Activated CD4-positive, alpha-beta T cell treated with anti-CD3 and anti-CD28 coated beads for 36 hours (primary cell): ENCODE measurements at regions of chr2 and their contacts with region 1.

Region 1: GRCh38 chr2:208373460-208374089 is 33.0 kb upstream of the PTH2R start:
- DNase-seq: peak; percentile 37
- ATAC-seq: peak; percentile 47
- H3K4me3 Mint-ChIP-seq: no peak overlapping the region
- H3K27ac Mint-ChIP-seq: no peak overlapping the region
- H3K4me1 Mint-ChIP-seq: no peaks in the 10 kb centered on the region
- H3K27me3 Mint-ChIP-seq: no peaks in the 10 kb centered on the region

Region 2: GRCh38 chr2:208175069-208175839 is 198.3 kb before region 1 on chr2:
- CTCF ChIA-PET with region 1: no interaction called
- POLR2A ChIA-PET with region 1: no interaction called
- intact Hi-C with region 1: loop called in 1 of 2 experiments (anchors 1 kb)
- DNase-seq: peak; percentile 76
- ATAC-seq: peak; percentile 99
- H3K4me3 Mint-ChIP-seq: no peak overlapping the region
- H3K27ac Mint-ChIP-seq: no peak overlapping the region
- H3K4me1 Mint-ChIP-seq: peaks cover 4% of the 10 kb centered on the region
- H3K27me3 Mint-ChIP-seq: no peaks in the 10 kb centered on the region

Region 3: DNA sequence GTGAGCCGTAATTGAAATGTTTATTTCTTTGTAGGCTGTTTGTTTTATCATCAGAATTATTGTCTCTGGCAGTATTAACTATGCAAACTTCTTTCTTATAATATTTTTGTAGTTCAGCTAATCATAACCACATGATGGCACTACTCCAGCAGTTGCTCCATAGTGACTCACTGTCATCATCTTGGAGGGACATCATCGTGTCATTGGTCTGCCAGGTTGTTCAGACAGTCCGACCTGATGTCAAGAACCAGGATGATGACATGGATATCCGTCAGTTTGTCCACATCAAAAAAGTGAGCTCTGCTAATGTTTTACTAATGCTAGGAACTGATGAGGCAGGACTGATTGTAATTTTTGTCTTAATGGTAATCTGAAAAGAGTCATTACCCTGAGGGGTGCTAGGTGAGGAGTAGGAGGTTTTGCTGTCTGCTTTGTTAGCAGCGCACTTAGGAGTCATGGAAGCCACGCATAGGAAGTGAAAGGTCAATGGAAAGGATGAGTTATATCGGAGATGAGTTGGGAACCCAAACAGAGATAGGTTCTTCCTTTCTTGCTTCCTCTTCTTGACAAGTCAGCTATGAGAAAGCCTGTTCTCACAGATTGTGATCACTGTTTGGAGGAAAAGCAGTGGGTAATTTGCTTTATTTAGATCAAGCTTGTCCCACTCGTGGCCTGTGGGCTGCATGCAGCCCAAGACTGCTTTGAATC is 58.3 kb before region 1 on chr2:
- CTCF ChIA-PET with region 1: no interaction called
- POLR2A ChIA-PET with region 1: interaction called, 10 read pairs
- intact Hi-C with region 1: no loop called
- DNase-seq: no peak
- ATAC-seq: peak; percentile 64
- H3K4me3 Mint-ChIP-seq: no peak overlapping the region
- H3K27ac Mint-ChIP-seq: peak overlapping the region; percentile 44
- H3K4me1 Mint-ChIP-seq: peaks cover 29% of the 10 kb centered on the region
- H3K27me3 Mint-ChIP-seq: no peaks in the 10 kb centered on the region